HepG2 (cell line): ENCODE measurements at regions of chr7 and their contacts with region 1.

Region 1: GRCh38 chr7:105759670-105760550 is 116.5 kb downstream of the ATXN7L1 start:
- DNase-seq: peak; percentile 41
- ATAC-seq: peak; percentile 73
- H3K4me3 ChIP-seq: no peak overlapping the region
- H3K27ac ChIP-seq: no peak overlapping the region
- H3K4me1 ChIP-seq: no peaks in the 10 kb centered on the region
- H3K27me3 ChIP-seq: no peaks in the 10 kb centered on the region
- CTCF ChIP-seq: peak; percentile 63
- EP300 ChIP-seq: no peak
- POLR2A ChIP-seq: no peak
- RAD21 ChIP-seq: peak; percentile 62; the same call in 1 of the 2 replicates

Region 2: DNA sequence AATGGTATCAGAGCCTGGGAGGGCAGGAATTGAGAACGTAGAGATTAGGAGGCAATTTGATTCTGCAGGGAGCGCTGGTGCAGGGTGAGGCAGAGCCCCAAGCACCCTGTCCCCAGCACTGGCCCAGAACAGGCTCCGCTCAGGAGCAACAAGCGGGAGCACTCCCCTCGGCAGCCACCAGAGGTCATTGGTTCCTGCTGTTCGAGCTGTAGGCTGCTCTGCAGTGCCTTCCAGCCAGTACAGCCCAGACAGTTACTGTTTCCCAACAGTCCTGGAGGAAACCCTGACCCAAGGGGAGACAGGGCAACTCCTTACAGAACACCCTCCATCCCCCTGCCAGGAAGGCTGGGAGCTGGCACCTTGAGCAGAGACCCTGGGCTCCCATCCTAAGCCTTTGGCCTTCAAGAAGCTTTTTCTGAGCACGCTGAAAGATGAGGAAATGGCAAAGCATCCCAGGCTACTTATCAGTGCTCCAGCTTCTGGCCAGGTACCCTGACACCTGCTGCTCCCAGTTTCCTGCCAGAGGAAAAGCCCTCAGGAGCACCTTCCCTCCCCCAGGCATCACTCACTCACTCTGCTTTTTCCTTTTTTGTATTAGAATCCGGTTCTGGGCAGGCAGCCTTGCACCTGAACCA is 107.4 kb before region 1 on chr7:
- CTCF ChIA-PET with region 1: no interaction called
- POLR2A ChIA-PET with region 1: no interaction called
- in situ Hi-C with region 1: no loop called
- intact Hi-C with region 1: loop called (anchors 2 kb)
- DNase-seq: peak; percentile 62
- ATAC-seq: peak; percentile 96
- H3K4me3 ChIP-seq: no peak overlapping the region
- H3K27ac ChIP-seq: no peak overlapping the region
- H3K4me1 ChIP-seq: peaks cover 46% of the 10 kb centered on the region
- H3K27me3 ChIP-seq: no peaks in the 10 kb centered on the region
- CTCF ChIP-seq: peak; percentile 94
- EP300 ChIP-seq: no peak
- POLR2A ChIP-seq: no peak
- RAD21 ChIP-seq: peak; percentile 90

Region 3: GRCh38 chr7:105876091-105876963 is 116.4 kb after region 1 on chr7 and contains the start of gene ATXN7L1:
- CTCF ChIA-PET with region 1: interaction called, 3 read pairs
- POLR2A ChIA-PET with region 1: no interaction called
- in situ Hi-C with region 1: loop called (anchors 5 kb)
- intact Hi-C with region 1: loop called (anchors 2 kb)
- DNase-seq: peak; percentile 92
- ATAC-seq: peak; percentile 89
- H3K4me3 ChIP-seq: peak within 1 kb of the TSS; percentile 77 to 90 (median 88)
- H3K27ac ChIP-seq: peak within 1 kb of the TSS; percentile 85
- H3K4me1 ChIP-seq: peaks cover 51% of the 10 kb centered on the region
- H3K27me3 ChIP-seq: no peaks in the 10 kb centered on the region; a peak in 1 of 5 replicates
- CTCF ChIP-seq: peak; percentile 43; the same call in 1 of the 2 replicates
- EP300 ChIP-seq: no peak
- POLR2A ChIP-seq: peak; percentile 69 to 70
- RAD21 ChIP-seq: peak; percentile 71; the same call in 1 of the 2 replicates
- total RNA-seq, gene ATXN7L1: 7.7 and 7.8 TPM in 2 replicates

Region 4: DNA sequence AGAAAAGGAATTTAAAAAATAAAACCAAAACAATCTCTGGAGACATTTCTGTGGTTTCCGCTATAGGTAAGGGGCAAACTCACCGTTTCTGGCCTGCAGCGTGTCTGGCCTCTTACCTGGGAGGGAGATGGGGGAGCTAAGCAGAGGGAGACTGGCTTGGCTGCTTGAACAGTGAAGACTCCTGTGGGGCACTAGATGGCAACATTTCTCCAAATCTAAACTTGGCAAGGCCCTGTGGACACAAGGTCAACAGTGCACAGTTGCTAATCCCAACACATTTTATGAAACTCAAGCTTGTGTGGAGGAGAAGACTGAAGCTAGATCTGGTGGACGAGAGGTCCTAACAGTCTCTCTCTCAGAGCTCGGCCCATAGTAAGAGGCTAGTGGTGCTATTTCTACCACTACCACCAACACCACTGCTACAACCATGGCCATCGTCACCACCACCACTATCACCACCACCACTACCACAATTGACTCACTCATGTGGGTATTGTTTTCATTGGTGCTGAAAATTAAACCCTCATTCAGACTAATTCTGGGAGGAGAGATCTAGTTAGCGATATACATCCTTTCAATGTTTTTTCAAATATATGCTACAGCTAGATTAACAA is 174.8 kb after region 1 on chr7:
- CTCF ChIA-PET with region 1: no interaction called
- POLR2A ChIA-PET with region 1: no interaction called
- in situ Hi-C with region 1: no loop called
- intact Hi-C with region 1: loop called (anchors 1 kb)
- DNase-seq: peak; percentile 64
- ATAC-seq: peak; percentile 99
- H3K4me3 ChIP-seq: no peak overlapping the region
- H3K27ac ChIP-seq: no peak overlapping the region
- H3K4me1 ChIP-seq: peaks cover 11% of the 10 kb centered on the region
- H3K27me3 ChIP-seq: no peaks in the 10 kb centered on the region
- CTCF ChIP-seq: peak; percentile 72
- EP300 ChIP-seq: no peak
- POLR2A ChIP-seq: no peak
- RAD21 ChIP-seq: peak; percentile 75

Region 5: GRCh38 chr7:106009403-106010226 is 249.7 kb after region 1 on chr7:
- CTCF ChIA-PET with region 1: no interaction called
- POLR2A ChIA-PET with region 1: no interaction called
- in situ Hi-C with region 1: loop called (anchors 10 kb)
- intact Hi-C with region 1: loop called (anchors 1 kb)
- DNase-seq: no peak
- ATAC-seq: peak; percentile 95
- H3K4me3 ChIP-seq: no peak overlapping the region
- H3K27ac ChIP-seq: no peak overlapping the region
- H3K4me1 ChIP-seq: peaks cover 10% of the 10 kb centered on the region; the same call in 1 of the 2 replicates
- H3K27me3 ChIP-seq: no peaks in the 10 kb centered on the region
- CTCF ChIP-seq: peak; percentile 86
- EP300 ChIP-seq: no peak
- POLR2A ChIP-seq: no peak
- RAD21 ChIP-seq: peak; percentile 83

Region 6: DNA sequence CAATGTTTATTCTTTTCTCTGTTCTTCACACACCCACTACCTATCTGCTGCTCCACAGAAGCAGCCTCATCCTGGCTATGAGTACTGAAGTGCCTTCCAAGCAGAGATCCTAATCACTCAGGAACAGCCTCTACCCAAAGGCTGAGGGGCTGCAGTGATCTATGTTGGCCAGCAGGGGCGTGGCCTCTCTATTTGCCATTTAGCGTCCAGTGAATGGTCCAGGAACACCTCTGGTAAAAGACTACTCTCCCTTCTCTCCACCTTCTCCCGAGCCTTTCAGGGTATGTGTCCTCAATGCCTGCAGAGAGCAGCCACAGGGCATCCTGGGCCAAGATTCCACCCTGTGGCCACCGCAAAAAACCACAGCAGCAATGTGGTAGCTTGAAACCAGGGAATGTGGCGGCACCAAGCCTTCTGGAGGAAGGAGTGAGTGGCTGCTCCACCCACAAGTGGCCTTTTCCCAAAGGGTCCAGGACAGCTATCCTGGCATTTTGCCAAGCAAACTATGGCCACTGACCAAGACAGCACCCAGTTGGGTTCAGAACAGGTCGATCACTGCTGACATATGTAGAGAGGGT is 281.3 kb after region 1 on chr7:
- CTCF ChIA-PET with region 1: interaction called, 29 read pairs
- POLR2A ChIA-PET with region 1: no interaction called
- in situ Hi-C with region 1: loop called (anchors 5 kb)
- intact Hi-C with region 1: loop called (anchors 1 kb)
- DNase-seq: peak; percentile 50
- ATAC-seq: peak; percentile 79
- H3K4me3 ChIP-seq: no peak overlapping the region
- H3K27ac ChIP-seq: no peak overlapping the region
- H3K4me1 ChIP-seq: peaks cover 20% of the 10 kb centered on the region
- H3K27me3 ChIP-seq: peaks cover 0 to 12% of the 10 kb centered on the region in 2 experiments; a peak in 1 of 5 replicates
- CTCF ChIP-seq: peak; percentile 70
- EP300 ChIP-seq: no peak
- POLR2A ChIP-seq: no peak
- RAD21 ChIP-seq: no peak

Region 7: GRCh38 chr7:106153891-106154449 is 394.1 kb after region 1 on chr7:
- CTCF ChIA-PET with region 1: no interaction called
- POLR2A ChIA-PET with region 1: no interaction called
- in situ Hi-C with region 1: no loop called
- intact Hi-C with region 1: loop called (anchors 10 kb)
- DNase-seq: peak; percentile 54
- ATAC-seq: peak; percentile 98
- H3K4me3 ChIP-seq: no peak overlapping the region
- H3K27ac ChIP-seq: no peak overlapping the region
- H3K4me1 ChIP-seq: peaks cover 13% of the 10 kb centered on the region
- H3K27me3 ChIP-seq: peaks cover 2 to 19% of the 10 kb centered on the region in 2 experiments; a peak in 3 of 5 replicates
- CTCF ChIP-seq: peak; percentile 95
- EP300 ChIP-seq: no peak
- POLR2A ChIP-seq: no peak
- RAD21 ChIP-seq: peak; percentile 93